ENCODE measurements at regions of chr5 and their contacts with region 1.

Region 1: DNA sequence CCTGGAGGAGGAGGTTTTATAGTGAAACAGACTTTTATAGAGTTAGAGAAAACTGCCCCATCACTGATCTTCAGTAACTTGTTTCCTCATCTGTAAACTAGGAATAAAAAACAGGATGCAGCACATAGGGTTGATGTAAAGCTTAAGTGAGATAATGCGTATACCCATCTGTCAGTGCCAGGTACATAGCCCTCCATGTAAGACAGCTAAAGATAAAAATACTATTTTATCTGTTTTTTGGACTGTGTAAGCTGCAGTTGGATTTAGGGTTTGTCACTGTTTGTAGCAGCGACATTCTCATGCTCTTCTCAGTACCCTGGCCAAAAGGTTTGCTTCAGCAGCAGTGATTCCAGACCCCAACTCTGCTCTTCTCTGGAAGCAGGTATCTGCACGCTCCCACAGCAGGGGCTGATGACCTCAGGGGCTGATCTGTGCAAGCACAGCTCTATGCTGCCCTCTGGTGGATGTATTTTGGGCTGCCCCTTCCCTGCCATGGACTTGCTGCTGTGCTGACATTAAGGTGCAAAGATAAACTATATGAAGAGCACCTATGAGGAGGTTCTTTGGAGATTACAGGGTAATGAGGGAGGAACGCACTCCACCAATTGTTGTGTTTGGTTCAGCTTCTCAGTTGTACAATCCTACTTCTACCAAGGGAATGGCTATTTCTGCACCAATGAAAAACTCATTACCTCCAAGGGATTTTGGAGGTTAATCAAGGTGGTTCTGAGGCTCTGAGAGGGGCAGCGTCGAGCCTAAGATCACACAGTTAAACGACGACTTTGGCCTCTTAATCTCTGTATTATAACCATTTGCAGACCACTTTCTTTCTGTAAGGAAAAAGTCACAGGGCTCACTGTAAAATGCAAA is 13.1 kb downstream of the HMHB1 start:
- DNase-seq: peak; percentile 78 to 85 (median 82)
- ATAC-seq: peak; percentile 100
- H3K4me3 ChIP-seq: no peak overlapping the region
- H3K27ac ChIP-seq: no peak overlapping the region
- H3K4me1 ChIP-seq: peaks cover 0 to 7% of the 10 kb centered on the region in 2 experiments; a peak in 2 of 5 replicates
- H3K27me3 ChIP-seq: no peaks in the 10 kb centered on the region
- CTCF ChIP-seq: peak; percentile 80 to 88 (median 86)
- EP300 ChIP-seq: no peak
- POLR2A ChIP-seq: no peak
- RAD21 ChIP-seq: peak; percentile 90 to 97

Region 2: DNA sequence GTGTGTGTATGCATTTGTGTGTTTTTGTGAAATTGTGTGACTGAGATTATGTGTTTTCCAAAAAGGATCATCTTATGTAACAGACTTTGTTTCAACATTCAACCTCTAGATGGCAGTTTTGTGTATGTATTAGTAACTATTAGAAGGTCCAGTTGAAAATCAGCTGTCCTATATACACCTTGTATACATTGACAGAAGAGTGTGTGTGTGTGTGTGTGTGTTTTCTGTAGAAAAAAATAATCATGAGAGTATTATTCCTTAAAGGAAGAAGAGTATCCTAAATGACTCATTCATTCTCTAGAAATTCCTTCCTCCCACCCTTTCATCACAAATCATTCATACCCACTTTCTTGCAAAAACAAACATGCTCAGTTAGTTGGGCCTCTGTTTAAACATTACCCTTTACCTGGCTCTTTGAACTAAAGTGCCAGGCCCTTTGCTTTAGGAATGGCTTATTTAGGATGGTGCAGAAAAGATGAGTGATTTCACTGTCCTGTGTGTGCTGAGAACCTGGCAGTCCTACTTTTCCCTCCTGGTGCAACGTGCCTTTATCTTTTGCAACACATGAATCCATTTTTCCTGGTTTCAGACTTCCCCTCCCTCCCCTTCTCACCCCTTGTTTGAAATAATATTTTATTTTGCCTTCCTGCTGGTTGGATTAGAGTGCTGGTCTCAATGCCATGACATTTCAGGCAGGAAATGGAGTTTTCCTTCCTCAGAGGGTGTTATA is 902.7 kb before region 1 on chr5:
- CTCF ChIA-PET with region 1: interaction called, 6 read pairs
- POLR2A ChIA-PET with region 1: no interaction called
- in situ Hi-C with region 1: loop called (anchors 10 kb)
- intact Hi-C with region 1: loop called (anchors 2 kb)
- DNase-seq: peak; percentile 8 to 24 (median 14)
- ATAC-seq: peak; percentile 70
- H3K4me3 ChIP-seq: no peak overlapping the region
- H3K27ac ChIP-seq: no peak overlapping the region
- H3K4me1 ChIP-seq: no peaks in the 10 kb centered on the region
- H3K27me3 ChIP-seq: 0 out of 5 replicates have a peak, but pooled peaks cover 0 to 2% of the 10 kb centered on the region in 2 experiments
- CTCF ChIP-seq: peak in 2 of 3 experiments; percentile 23 to 54; a peak in 2 of 6 replicates
- EP300 ChIP-seq: no peak
- POLR2A ChIP-seq: no peak
- RAD21 ChIP-seq: peak; percentile 68 to 76

Region 3: DNA sequence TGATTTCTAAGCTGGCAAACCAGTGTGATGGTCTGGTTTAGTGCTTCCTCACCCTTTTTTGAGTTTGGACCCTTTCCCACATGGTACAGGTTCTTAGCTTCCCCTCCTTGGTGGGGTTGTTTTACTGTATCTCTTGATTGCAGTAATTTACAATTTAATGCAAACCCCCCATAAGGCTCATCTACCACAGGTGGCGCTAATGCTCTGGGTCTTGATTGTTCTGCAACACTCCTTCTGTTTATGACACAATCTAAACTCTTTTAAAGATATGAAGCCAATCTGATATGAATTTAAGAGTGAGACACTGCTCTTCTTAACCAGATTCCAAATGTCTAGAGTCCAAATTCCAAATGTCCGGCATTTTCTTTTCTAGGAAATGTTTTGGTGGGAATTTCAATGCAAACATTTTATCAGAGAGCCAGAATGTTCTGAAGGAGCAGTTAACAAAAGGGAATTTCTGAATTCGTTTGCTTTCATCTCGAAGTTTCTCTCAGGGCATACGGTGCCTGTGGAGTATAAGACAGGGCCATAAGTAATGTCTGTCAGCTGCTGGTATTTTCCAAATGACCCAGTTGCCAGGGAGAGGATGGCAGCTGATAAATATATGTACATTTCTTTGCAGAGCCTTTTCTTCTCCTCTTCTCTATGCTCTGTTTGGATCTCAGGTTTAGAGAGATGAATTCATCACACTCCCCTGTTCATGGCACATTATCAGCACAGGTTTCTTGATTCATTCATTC is 808.1 kb before region 1 on chr5:
- CTCF ChIA-PET with region 1: interaction called, 3 read pairs
- POLR2A ChIA-PET with region 1: no interaction called
- in situ Hi-C with region 1: no loop called
- intact Hi-C with region 1: loop called (anchors 1 kb)
- DNase-seq: peak; percentile 17 to 55 (median 38)
- ATAC-seq: peak; percentile 79
- H3K4me3 ChIP-seq: no peak overlapping the region
- H3K27ac ChIP-seq: no peak overlapping the region
- H3K4me1 ChIP-seq: peaks cover 0 to 6% of the 10 kb centered on the region in 2 experiments; a peak in 2 of 5 replicates
- H3K27me3 ChIP-seq: no peaks in the 10 kb centered on the region
- CTCF ChIP-seq: peak; percentile 44 to 71 (median 69); a peak in 5 of 6 replicates
- EP300 ChIP-seq: no peak
- POLR2A ChIP-seq: no peak
- RAD21 ChIP-seq: peak; percentile 78 to 86

Region 4: DNA sequence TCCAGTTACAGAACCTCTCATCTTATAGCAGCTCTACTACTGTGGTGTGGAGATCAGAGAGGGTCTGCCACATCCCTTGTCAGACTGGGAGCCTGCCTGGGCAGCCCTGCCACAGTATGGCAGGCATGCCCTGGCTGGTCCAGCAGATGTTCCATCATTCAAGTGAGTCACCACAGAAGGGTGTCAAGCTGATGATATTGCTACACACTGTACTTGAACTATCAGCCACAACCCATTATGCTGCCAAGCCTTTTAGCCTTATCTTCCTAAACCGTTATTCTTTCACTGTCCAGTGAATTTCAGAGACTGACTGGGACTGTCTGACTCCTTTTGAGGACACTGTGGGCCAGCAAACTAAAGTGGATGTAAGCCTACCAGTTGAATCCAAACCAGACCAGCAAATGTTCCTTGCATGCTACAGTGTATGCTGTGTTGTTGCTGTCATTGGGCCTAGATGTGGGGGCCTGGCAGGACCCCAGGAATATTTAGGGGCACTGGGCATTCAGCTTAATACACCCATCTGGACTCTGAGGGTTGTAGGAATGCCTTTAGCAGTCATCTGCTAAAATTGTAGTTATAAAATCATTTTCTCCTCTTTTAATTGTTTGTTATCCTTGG is 624.2 kb before region 1 on chr5:
- CTCF ChIA-PET with region 1: no interaction called
- POLR2A ChIA-PET with region 1: no interaction called
- in situ Hi-C with region 1: no loop called
- intact Hi-C with region 1: loop called (anchors 10 kb)
- DNase-seq: peak in 3 of 4 experiments; percentile 31 to 74 (median 55)
- ATAC-seq: peak; percentile 93
- H3K4me3 ChIP-seq: no peak overlapping the region
- H3K27ac ChIP-seq: peak overlapping the region; percentile 8; the same call in 1 of the 3 replicates
- H3K4me1 ChIP-seq: peaks cover 3 to 15% of the 10 kb centered on the region in 2 experiments; a peak in 3 of 5 replicates
- H3K27me3 ChIP-seq: no peaks in the 10 kb centered on the region
- CTCF ChIP-seq: no peak
- EP300 ChIP-seq: peak; percentile 81; the same call in 1 of the 2 replicates
- POLR2A ChIP-seq: no peak
- RAD21 ChIP-seq: peak; percentile 7 to 53; a peak in 3 of 4 replicates

Region 5: GRCh38 chr5:143648696-143649095 is 176.4 kb before region 1 on chr5:
- CTCF ChIA-PET with region 1: interaction called, 6 read pairs
- POLR2A ChIA-PET with region 1: no interaction called
- in situ Hi-C with region 1: no loop called
- intact Hi-C with region 1: loop called (anchors 2 kb)
- DNase-seq: peak; percentile 10 to 16 (median 13)
- ATAC-seq: peak; percentile 74
- H3K4me3 ChIP-seq: no peak overlapping the region
- H3K27ac ChIP-seq: no peak overlapping the region
- H3K4me1 ChIP-seq: no peaks in the 10 kb centered on the region
- H3K27me3 ChIP-seq: no peaks in the 10 kb centered on the region
- CTCF ChIP-seq: peak; percentile 20 to 41 (median 40); a peak in 3 of 6 replicates
- EP300 ChIP-seq: no peak
- POLR2A ChIP-seq: no peak
- RAD21 ChIP-seq: peak; percentile 36 to 51

Region 6: GRCh38 chr5:143812085-143812705 is 12.9 kb before region 1 on chr5 and contains the start of gene HMHB1:
- CTCF ChIA-PET with region 1: no interaction called
- POLR2A ChIA-PET with region 1: no interaction called
- in situ Hi-C with region 1: no loop called
- intact Hi-C with region 1: no loop called
- DNase-seq: no peak
- ATAC-seq: no peak
- H3K4me3 ChIP-seq: no peak within 1 kb of the TSS
- H3K27ac ChIP-seq: no peak within 1 kb of the TSS
- H3K4me1 ChIP-seq: no peaks in the 10 kb centered on the region
- H3K27me3 ChIP-seq: peaks cover 2 to 13% of the 10 kb centered on the region in 2 experiments; a peak in 3 of 5 replicates
- CTCF ChIP-seq: no peak
- EP300 ChIP-seq: no peak
- POLR2A ChIP-seq: no peak
- RAD21 ChIP-seq: no peak
- polyA plus RNA-seq, gene HMHB1: not detected